AG04450 (cell line): ENCODE measurements at regions of chr16 and their contacts with region 1.

Region 1: DNA sequence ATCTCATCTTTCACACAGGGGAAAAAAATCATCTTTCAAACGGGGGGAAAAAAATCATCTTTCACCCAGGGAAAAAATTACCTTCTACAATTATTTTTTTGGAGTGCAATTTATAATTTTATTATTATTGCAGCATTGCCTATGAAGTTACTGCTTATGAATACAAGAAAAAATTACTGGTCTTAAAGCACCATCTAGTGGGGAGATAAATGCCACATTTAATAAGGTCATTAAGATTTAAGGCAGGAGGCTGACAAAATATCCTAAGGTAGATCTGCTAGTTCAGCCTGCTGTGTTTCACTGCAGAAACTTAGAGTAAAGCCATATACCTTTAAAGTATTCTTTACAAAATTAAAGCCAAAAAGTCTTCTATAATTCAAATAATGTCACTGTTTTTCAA is 13.7 kb downstream of the SHCBP1 start:
- DNase-seq: peak; percentile 29
- H3K4me3 ChIP-seq: no peak overlapping the region
- H3K27ac ChIP-seq: no peak overlapping the region
- H3K27me3 ChIP-seq: no peaks in the 10 kb centered on the region
- CTCF ChIP-seq: peak; percentile 52

Region 2: DNA sequence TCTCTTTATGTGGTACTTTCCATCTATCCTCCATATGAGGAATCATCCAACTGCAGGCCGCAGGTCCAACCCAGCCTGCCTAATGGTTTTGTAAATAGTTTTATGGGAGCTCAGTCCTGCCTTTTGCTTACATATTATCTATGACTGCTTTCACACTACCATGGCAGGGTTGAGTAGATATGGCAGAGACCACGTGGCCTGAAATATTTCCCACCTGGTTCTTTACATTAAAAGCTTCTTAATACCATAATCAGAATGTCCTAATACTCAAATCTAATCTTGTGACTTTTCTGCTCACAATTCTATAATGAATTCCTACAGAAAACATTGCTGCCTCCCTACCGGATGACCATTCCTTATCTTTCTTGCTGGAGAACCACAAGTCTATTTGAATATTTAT is 58.1 kb before region 1 on chr16:
- CTCF ChIA-PET with region 1: interaction called, 304 read pairs
- POLR2A ChIA-PET with region 1: no interaction called
- DNase-seq: no peak
- H3K4me3 ChIP-seq: no peak overlapping the region
- H3K27ac ChIP-seq: no peak overlapping the region
- H3K27me3 ChIP-seq: no peaks in the 10 kb centered on the region
- CTCF ChIP-seq: no peak

Region 3: GRCh38 chr16:46618516-46618915 is 11.0 kb after region 1 on chr16:
- CTCF ChIA-PET with region 1: interaction called, 21 read pairs
- POLR2A ChIA-PET with region 1: no interaction called
- DNase-seq: no peak
- H3K4me3 ChIP-seq: no peak overlapping the region
- H3K27ac ChIP-seq: no peak overlapping the region
- H3K27me3 ChIP-seq: no peaks in the 10 kb centered on the region
- CTCF ChIP-seq: no peak

Region 4: DNA sequence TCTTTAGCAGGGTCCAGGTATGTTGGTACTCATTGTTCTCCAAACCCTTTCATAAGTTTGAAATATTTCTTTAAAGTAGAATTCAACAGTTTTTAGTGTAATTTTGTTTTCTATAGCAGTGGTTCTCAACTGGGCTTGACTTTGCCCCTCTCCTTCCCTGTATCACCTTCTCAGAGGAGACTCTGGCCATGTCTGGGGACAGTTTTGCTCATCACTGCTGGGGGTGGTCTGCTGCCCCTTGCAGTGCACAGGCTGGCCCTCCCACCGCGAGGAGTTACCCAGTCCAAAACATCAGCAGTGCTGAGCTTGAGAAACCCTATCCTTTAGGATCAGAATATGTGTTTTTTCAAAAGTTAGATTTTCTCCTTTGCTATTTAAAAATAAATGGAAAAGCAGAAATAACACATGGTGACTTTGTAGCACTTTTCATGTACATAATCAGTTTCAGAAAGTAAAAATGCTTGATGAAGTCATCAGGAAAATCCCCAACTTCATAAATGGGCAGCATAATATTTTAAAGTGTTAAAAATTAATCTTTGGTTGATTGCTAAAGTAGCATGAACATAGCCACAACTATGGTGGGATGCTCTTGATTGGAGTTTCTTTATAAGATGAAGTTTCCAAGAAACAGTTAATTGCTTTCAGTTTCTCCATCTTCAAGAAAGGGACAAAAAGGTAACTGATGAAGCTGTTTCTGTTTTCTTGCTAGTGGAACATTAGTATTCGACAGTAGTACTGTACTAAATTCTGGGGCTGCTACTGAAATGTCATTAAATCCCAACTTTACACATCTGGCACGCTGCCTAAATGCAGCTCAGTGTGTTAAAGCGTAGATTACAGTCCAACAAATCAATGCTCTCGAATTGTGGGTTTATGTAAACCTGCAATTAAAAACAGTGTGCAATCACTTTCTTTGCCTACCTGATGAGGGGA is 466.0 kb after region 1 on chr16:
- CTCF ChIA-PET with region 1: no interaction called
- POLR2A ChIA-PET with region 1: no interaction called
- DNase-seq: no peak
- H3K4me3 ChIP-seq: no peak overlapping the region
- H3K27ac ChIP-seq: no peak overlapping the region
- H3K27me3 ChIP-seq: peaks cover 2% of the 10 kb centered on the region
- CTCF ChIP-seq: no peak